Esophagus squamous epithelium (tissue), 5 donors: ENCODE measurements at regions of chr9 and their contacts with region 1.

Region 1: DNA sequence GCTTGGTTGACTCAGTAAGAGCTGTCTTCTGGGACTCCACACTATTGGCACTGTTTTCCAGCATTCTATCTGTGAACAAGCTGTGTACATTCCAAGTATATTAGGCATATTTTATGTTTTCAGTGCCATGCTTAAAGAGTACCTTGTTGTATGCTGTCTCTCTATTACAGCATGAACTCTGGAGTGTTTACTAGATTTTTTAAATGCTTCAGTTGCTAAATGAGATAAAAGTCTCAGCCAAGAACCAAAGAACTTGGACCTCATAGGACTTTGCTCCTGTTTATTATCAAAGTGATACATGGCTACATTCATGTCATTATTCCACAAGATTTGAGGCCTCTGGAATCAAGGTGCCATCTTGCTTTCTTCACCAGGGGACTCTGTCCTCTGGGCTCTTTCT is 167.2 kb downstream of the C9orf152 start:
- DNase-seq: no peak
- H3K4me3 ChIP-seq: no peak overlapping the region
- H3K27ac ChIP-seq: peak overlapping the region in 1 of 4 donors; percentile 44
- H3K4me1 ChIP-seq: peaks cover 0 to 7% (median 0%) of the 10 kb centered on the region in 3 donors
- H3K27me3 ChIP-seq: no peaks in the 10 kb centered on the region
- CTCF ChIP-seq: no peak
- POLR2A ChIP-seq: no peak

Region 2: GRCh38 chr9:109914280-109915027 is 126.3 kb before region 1 on chr9:
- intact Hi-C with region 1: loop called (anchors 5 kb)
- DNase-seq: no peak
- H3K4me3 ChIP-seq: no peak overlapping the region
- H3K27ac ChIP-seq: no peak overlapping the region
- H3K4me1 ChIP-seq: peaks cover 3 to 54% (median 18%) of the 10 kb centered on the region in 3 donors
- H3K27me3 ChIP-seq: no peaks in the 10 kb centered on the region
- CTCF ChIP-seq: no peak
- POLR2A ChIP-seq: no peak

Region 3: GRCh38 chr9:109969011-109969410 is 71.8 kb before region 1 on chr9:
- intact Hi-C with region 1: no loop called
- DNase-seq: no peak
- H3K4me3 ChIP-seq: no peak overlapping the region
- H3K27ac ChIP-seq: peak overlapping the region in 1 of 4 donors; percentile 60
- H3K4me1 ChIP-seq: peaks cover 0 to 18% (median 9%) of the 10 kb centered on the region in 3 donors
- H3K27me3 ChIP-seq: no peaks in the 10 kb centered on the region
- CTCF ChIP-seq: peak in 1 of 6 experiments; percentile 9
- POLR2A ChIP-seq: no peak